GM12878 (cell line): ENCODE measurements at regions of chr17 and their contacts with region 1.

Region 1: GRCh38 chr17:32569171-32570080 is 82.6 kb downstream of the CDK5R1 start:
- DNase-seq: peak; percentile 90
- ATAC-seq: peak; percentile 81
- H3K4me3 ChIP-seq: no peak overlapping the region
- H3K27ac ChIP-seq: peak overlapping the region; percentile 99
- H3K4me1 ChIP-seq: peaks cover 51% of the 10 kb centered on the region
- H3K27me3 ChIP-seq: no peaks in the 10 kb centered on the region
- CTCF ChIP-seq: 0 out of 6 replicates have a peak, but pooled peaks of 1 of the 3 experiments have one; percentile 5
- EP300 ChIP-seq: peak; percentile 36 to 50; a peak in 3 of 4 replicates
- POLR2A ChIP-seq: no peak
- RAD21 ChIP-seq: no peak; the same call in none of the 2 replicates

Region 2: GRCh38 chr17:32495359-32496231 is 73.8 kb before region 1 on chr17:
- CTCF ChIA-PET with region 1: interaction called, 4 read pairs
- POLR2A ChIA-PET with region 1: interaction called, 16 read pairs
- RAD21 ChIA-PET with region 1: interaction called, 5 read pairs
- SMC1A ChIA-PET with region 1: interaction called, 16 read pairs
- in situ Hi-C with region 1: no loop called
- intact Hi-C with region 1: no loop called
- DNase-seq: no peak
- ATAC-seq: peak; percentile 49
- H3K4me3 ChIP-seq: no peak overlapping the region
- H3K27ac ChIP-seq: no peak overlapping the region
- H3K4me1 ChIP-seq: peaks cover 29% of the 10 kb centered on the region
- H3K27me3 ChIP-seq: no peaks in the 10 kb centered on the region
- CTCF ChIP-seq: no peak
- EP300 ChIP-seq: no peak
- POLR2A ChIP-seq: no peak
- RAD21 ChIP-seq: no peak

Region 3: DNA sequence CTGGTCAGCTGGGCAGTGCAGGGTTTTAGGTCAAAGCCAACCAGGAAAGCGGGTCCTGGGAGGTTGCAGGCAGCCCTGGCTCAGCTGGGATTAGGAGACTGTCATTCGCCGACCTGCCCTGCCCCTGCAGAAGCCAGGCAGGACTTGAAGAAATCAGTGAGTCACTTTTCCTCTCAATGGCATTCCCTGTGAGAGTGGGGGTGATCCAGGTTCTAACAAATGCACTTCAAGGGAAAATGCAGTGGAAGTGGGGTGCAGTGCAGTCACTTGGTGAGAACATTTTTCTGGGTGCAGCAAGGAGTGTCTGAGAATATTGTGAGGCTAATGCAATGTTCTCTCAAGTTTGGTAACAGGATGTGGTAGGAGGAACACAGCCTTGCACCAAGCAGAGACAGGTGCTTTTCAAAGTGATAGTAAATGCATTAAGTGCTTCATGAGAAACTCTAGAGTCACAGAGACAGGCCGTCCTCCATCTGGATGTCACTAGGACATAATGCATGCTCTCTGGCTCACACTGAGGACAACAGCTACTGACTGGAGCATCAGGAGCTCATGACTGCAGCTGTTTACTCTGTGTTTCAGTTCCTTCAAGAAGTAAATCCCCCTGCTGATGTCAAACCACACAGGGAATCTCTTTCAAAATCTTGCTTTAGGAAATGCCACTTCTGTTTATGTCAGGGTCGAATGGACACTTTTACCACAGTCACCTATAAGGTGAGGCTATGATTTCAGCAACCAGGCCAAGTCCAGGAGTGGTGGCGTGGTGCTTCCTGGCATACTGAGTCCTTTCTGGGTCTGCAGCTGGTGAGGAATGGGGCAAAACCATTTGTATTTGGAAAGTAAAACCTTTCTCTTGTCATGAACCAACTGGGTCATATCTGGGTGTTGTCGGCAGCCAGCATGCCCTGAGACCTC is 65.9 kb before region 1 on chr17:
- CTCF ChIA-PET with region 1: no interaction called
- POLR2A ChIA-PET with region 1: interaction called, 3 read pairs
- RAD21 ChIA-PET with region 1: interaction called, 4 read pairs
- SMC1A ChIA-PET with region 1: interaction called, 6 read pairs
- in situ Hi-C with region 1: no loop called
- intact Hi-C with region 1: loop called (anchors 1 kb)
- DNase-seq: peak; percentile 98
- ATAC-seq: peak; percentile 95
- H3K4me3 ChIP-seq: peak overlapping the region; percentile 37; the same call in 1 of the 2 replicates
- H3K27ac ChIP-seq: peak overlapping the region; percentile 87
- H3K4me1 ChIP-seq: peaks cover 27% of the 10 kb centered on the region
- H3K27me3 ChIP-seq: no peaks in the 10 kb centered on the region
- CTCF ChIP-seq: no peak
- EP300 ChIP-seq: peak; percentile 92 to 94
- POLR2A ChIP-seq: peak; percentile 61
- RAD21 ChIP-seq: 0 out of 2 replicates have a peak, but pooled peaks have one; percentile 15

Region 4: GRCh38 chr17:32551186-32551955 is 18.1 kb before region 1 on chr17:
- CTCF ChIA-PET with region 1: interaction called, 11 read pairs
- POLR2A ChIA-PET with region 1: interaction called, 7 read pairs
- RAD21 ChIA-PET with region 1: interaction called, 8 read pairs
- SMC1A ChIA-PET with region 1: interaction called, 84 read pairs
- in situ Hi-C with region 1: no loop called
- intact Hi-C with region 1: no loop called
- DNase-seq: peak; percentile 71
- ATAC-seq: peak; percentile 96
- H3K4me3 ChIP-seq: no peak overlapping the region
- H3K27ac ChIP-seq: peak overlapping the region; percentile 38
- H3K4me1 ChIP-seq: peaks cover 24% of the 10 kb centered on the region
- H3K27me3 ChIP-seq: no peaks in the 10 kb centered on the region
- CTCF ChIP-seq: no peak
- EP300 ChIP-seq: peak in 1 of 2 experiments; percentile 48; a peak in 2 of 4 replicates
- POLR2A ChIP-seq: no peak
- RAD21 ChIP-seq: peak; percentile 27; the same call in 1 of the 2 replicates